ENCODE measurements at regions of chr1 and their contacts with region 1.

Region 1: DNA sequence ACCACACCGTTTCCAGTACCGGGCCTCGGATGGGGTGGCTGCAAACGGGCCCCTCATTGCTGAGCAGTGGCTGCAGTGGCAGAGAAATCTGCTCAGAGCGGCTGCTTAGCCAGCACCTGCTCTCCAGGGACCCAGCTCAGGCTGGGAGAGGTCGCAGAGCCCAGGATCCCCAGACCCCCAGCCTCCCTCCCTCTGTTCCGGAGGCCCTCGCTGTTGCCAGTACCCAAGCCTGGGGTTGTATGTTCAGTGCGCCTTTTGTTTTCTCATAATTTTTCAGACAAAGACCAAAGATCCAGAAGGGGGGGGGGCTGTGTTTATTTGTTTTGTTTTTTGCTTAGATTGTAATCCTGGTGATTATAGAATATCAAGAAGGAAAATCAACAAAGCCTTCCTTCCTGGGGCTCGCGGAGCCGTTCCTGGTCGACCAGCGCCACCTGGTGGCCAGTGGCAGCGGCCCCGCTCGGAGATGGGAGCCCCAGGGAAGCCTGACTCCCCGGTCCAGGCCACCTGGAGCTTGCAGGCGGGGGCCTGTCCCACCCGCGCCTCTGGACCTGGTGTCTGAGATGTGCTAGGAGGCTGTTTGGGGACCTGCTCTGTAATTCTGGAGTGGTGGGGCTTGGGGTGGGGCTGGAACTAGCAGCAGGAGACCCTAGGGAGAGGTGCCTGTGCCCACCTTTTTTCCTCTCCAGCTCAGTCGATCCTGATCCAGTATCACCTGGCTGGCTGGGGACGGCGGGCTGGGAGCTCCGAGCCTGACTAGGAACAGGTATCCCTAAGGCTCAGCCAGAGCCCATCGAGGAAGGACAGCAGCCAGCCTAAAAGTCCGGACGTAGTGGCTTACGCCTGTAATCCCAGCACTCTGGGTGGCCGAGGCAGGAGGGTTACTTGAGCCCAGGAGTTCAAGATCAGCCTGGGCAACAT is 123.9 kb upstream of the VAMP3 start:
- DNase-seq: peak; percentile 38 to 76 (median 62)
- ATAC-seq: peak; percentile 59
- H3K4me3 ChIP-seq: no peak overlapping the region
- H3K4me3 Mint-ChIP-seq: no peak overlapping the region
- H3K27ac ChIP-seq: no peak overlapping the region
- H3K27ac Mint-ChIP-seq: no peak overlapping the region
- H3K4me1 ChIP-seq: peaks cover 8% of the 10 kb centered on the region
- H3K4me1 Mint-ChIP-seq: no peaks in the 10 kb centered on the region
- H3K27me3 ChIP-seq: no peaks in the 10 kb centered on the region
- H3K27me3 Mint-ChIP-seq: no peaks in the 10 kb centered on the region
- CTCF ChIP-seq: peak; percentile 89

Region 2: GRCh38 chr1:7042322-7043190 is 604.7 kb before region 1 on chr1:
- CTCF ChIA-PET with region 1: no interaction called
- POLR2A ChIA-PET with region 1: no interaction called
- intact Hi-C with region 1: loop called (anchors 2 to 5 kb)
- DNase-seq: peak in 2 of 14 experiments; percentile 6 to 22
- ATAC-seq: no peak
- H3K4me3 ChIP-seq: no peak overlapping the region
- H3K4me3 Mint-ChIP-seq: no peak overlapping the region
- H3K27ac ChIP-seq: no peak overlapping the region
- H3K27ac Mint-ChIP-seq: no peak overlapping the region
- H3K4me1 ChIP-seq: no peaks in the 10 kb centered on the region
- H3K4me1 Mint-ChIP-seq: no peaks in the 10 kb centered on the region
- H3K27me3 ChIP-seq: peaks cover 0 to 10% of the 10 kb centered on the region in 2 experiments
- H3K27me3 Mint-ChIP-seq: peaks cover 4% of the 10 kb centered on the region
- CTCF ChIP-seq: peak; percentile 24

Region 3: DNA sequence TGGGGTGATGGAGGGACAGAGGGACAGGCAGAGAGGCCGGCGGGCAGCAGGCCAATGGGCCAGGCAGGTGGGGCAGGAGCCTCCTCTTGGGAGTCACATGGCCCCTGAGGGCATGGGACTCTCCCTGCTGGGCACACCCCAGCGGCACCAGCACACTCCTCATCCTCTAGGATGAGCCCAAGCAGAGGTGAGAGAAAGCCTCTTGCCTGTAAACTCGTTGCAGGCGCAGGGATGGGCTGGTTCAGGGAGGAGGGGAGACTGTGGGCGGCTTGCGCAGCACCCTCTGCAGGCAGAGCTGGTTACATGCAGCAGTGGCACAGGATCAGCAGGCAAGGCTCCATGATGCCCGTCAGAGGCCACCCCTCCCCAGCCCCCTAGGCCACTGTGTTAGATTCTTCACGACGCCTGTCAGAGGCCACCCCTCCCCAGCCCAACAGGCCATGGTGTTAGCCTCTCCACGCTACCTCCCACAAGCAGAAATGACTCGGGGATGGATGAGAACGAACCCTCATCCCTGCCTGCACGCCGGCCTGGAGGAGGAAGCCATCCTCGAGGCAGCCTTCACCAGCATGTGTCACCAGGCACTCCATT is 85.8 kb before region 1 on chr1:
- CTCF ChIA-PET with region 1: no interaction called
- POLR2A ChIA-PET with region 1: no interaction called
- intact Hi-C with region 1: no loop called
- DNase-seq: no peak
- ATAC-seq: no peak
- H3K4me3 ChIP-seq: no peak overlapping the region
- H3K4me3 Mint-ChIP-seq: no peak overlapping the region
- H3K27ac ChIP-seq: no peak overlapping the region
- H3K27ac Mint-ChIP-seq: no peak overlapping the region
- H3K4me1 ChIP-seq: no peaks in the 10 kb centered on the region
- H3K4me1 Mint-ChIP-seq: no peaks in the 10 kb centered on the region
- H3K27me3 ChIP-seq: no peaks in the 10 kb centered on the region
- H3K27me3 Mint-ChIP-seq: no peaks in the 10 kb centered on the region
- CTCF ChIP-seq: no peak

Region 4: DNA sequence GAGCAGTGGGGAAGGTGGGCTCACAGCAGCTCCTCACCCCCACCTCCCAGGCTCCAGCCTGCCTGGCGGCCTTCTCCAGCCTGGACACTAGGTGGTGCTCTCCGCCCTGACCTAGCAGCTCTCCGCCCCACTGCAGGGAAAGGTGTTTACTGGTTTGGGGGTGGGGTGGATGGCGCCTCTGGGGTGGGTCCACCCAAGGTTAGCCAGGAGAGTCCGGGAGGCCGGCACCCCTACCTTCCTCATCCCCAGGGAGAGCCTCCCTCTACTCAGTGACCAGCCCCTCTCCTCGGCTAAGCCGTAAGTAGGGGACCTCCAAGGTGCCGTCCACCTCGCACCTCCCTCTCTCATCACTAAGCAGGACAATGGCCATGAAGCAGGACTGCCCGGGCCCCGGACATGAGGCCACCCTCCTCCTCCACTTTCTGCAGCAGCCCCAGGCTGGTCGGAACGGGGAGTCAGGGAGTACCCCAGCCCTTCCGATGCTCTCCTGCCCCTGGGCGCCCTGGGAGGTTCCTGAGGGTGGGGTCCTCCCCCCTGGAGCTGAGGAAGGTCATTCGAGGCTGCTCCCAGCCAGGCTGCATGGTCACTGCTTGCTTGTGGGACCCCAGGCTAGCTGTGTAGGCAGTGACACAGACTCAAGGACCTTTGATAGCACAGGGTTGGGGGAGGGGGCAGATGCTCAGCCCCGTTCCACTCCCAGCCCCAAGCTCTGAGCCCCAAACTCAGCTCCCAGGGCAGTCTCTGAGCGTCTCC is 22.5 kb after region 1 on chr1:
- CTCF ChIA-PET with region 1: no interaction called
- POLR2A ChIA-PET with region 1: no interaction called
- intact Hi-C with region 1: no loop called
- DNase-seq: peak; percentile 35 to 79 (median 51)
- ATAC-seq: peak; percentile 77
- H3K4me3 ChIP-seq: peak overlapping the region; percentile 41
- H3K4me3 Mint-ChIP-seq: peak overlapping the region; percentile 35
- H3K27ac ChIP-seq: no peak overlapping the region
- H3K27ac Mint-ChIP-seq: no peak overlapping the region
- H3K4me1 ChIP-seq: peaks cover 29% of the 10 kb centered on the region
- H3K4me1 Mint-ChIP-seq: no peaks in the 10 kb centered on the region
- H3K27me3 ChIP-seq: no peaks in the 10 kb centered on the region
- H3K27me3 Mint-ChIP-seq: no peaks in the 10 kb centered on the region
- CTCF ChIP-seq: peak; percentile 72

Region 5: DNA sequence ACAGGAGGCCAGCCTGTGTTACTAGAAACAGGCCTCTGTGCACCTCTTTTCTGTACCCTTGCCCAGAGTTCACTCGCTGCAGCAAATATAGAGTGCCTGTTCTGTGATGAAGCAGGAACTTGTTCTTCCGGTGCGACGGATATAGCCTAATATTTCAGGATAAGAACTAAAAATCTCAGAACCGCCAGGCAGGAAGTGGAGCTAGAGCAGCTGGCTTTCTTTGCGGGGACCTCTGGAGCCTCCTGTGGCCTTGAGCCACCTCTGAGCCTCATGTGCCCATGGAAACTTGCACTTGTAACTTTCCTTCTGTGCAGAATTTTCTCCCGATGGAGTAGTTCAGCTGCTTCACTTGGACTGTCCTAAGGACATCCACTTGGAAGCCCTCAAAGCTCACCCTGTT is 79.4 kb after region 1 on chr1:
- CTCF ChIA-PET with region 1: no interaction called
- POLR2A ChIA-PET with region 1: no interaction called
- intact Hi-C with region 1: no loop called
- DNase-seq: no peak
- ATAC-seq: no peak
- H3K4me3 ChIP-seq: no peak overlapping the region
- H3K4me3 Mint-ChIP-seq: no peak overlapping the region
- H3K27ac ChIP-seq: no peak overlapping the region
- H3K27ac Mint-ChIP-seq: no peak overlapping the region
- H3K4me1 ChIP-seq: peaks cover 5% of the 10 kb centered on the region
- H3K4me1 Mint-ChIP-seq: peaks cover 10% of the 10 kb centered on the region
- H3K27me3 ChIP-seq: peaks cover 0 to 5% of the 10 kb centered on the region in 2 experiments
- H3K27me3 Mint-ChIP-seq: peaks cover 5% of the 10 kb centered on the region
- CTCF ChIP-seq: no peak